Breast epithelium (tissue), 4 donors: ENCODE measurements at regions of chr2 and their contacts with region 1.

Region 1: GRCh38 chr2:215188078-215188477 is 49.7 kb upstream of the ABCA12 start:
- DNase-seq: no peak
- H3K4me3 ChIP-seq: no peak overlapping the region
- H3K27ac ChIP-seq: no peak overlapping the region
- H3K4me1 ChIP-seq: no peaks in the 10 kb centered on the region
- H3K27me3 ChIP-seq: no peaks in the 10 kb centered on the region
- CTCF ChIP-seq: no peak
- POLR2A ChIP-seq: no peak

Region 2: DNA sequence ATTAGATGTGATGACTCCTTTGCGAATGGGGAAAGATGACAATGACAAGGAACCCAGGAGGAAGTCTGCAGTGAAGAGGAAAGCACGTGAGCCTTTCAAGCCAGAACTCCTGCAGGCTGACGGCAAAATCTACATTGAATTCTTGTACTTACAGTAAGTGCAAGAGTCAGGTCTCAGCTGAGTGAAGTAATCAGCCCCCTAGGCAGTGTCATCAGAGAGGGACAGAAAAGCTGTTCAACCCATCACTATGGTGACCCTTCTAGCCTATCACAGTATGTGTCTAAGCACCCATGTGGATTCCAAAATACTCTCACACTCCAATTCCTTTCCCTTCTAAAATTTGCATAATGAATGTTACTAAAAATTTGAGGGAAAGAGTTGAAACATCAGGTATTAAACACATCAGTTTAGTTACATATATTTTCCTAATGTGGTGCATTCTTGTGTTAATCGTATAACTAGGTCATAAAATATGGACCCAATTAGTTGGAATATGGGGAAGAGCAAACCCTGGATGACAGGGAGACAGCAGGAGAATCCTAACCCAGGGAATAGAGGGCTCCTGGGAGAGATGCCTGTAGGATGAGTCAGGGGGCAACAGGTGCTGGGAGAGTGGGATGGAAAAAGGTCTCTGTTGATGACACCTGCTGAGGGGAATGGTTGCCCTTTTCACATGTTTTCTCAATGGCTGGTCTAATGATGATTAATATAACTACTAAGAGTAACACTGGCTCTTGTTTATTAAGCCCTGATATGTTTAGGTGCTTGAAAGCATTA is 737.8 kb before region 1 on chr2:
- intact Hi-C with region 1: loop called (anchors 5 kb)
- DNase-seq: no peak
- H3K4me3 ChIP-seq: no peak overlapping the region
- H3K27ac ChIP-seq: no peak overlapping the region
- H3K4me1 ChIP-seq: no peaks in the 10 kb centered on the region
- H3K27me3 ChIP-seq: no peaks in the 10 kb centered on the region
- CTCF ChIP-seq: no peak
- POLR2A ChIP-seq: no peak

Region 3: DNA sequence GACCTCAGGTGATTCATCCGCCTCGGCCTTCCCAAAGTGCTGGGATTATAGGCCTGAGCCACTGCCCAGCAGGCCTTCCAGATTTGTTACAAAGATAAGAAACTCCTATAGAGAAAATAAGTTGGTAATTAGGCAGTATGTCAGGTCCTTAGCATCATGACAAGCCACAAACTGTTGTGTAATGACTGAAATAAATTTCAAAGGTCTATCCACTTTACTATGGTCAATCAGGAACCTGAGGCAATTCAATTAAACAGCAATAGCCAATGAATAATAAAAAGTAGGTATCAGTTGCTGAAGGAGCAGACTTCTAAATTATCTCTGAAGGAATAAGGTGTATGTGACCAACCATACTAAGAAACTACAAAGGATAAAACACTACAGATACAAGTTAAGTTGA is 61.4 kb after region 1 on chr2:
- intact Hi-C with region 1: no loop called
- DNase-seq: no peak
- H3K4me3 ChIP-seq: no peak overlapping the region
- H3K27ac ChIP-seq: no peak overlapping the region
- H3K4me1 ChIP-seq: no peaks in the 10 kb centered on the region
- H3K27me3 ChIP-seq: no peaks in the 10 kb centered on the region
- CTCF ChIP-seq: no peak
- POLR2A ChIP-seq: no peak